Prostate gland (tissue), 2 donors: ENCODE measurements at regions of chr7 and their contacts with region 1.

Region 1: DNA sequence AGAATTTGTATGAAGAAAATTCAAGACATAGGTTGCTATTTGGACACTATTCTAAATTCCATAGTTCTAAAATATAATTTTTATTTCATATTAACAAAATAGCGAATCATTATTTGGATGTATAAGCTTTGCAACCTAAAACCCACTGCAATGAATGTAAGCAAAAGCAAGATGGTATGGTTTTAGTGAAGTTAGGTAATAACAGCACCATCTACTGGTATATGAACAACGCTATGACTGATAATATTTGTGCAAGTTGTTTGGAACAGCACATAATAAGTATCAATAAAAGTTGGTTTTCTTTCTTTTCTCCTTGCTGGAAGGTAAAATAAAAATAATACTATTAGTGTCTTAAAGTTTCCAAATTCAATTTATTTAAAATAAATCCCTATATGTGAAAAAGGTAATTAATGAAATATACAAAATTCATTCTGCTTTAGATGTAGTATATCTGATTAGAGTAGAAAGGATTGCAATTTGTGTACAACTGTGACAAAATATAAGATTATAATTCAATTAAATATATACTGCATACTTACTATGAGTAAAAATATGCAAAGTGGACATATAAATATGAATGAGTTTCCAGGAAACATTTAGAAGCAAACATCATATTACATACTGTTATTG is 79.0 kb upstream of the LSM8 start:
- DNase-seq: no peak
- H3K4me3 ChIP-seq: no peak overlapping the region
- H3K27ac ChIP-seq: no peak overlapping the region
- H3K4me1 ChIP-seq: no peaks in the 10 kb centered on the region
- H3K27me3 ChIP-seq: no peaks in the 10 kb centered on the region
- CTCF ChIP-seq: peak; percentile 14 to 69 (median 51)
- POLR2A ChIP-seq: no peak

Region 2: DNA sequence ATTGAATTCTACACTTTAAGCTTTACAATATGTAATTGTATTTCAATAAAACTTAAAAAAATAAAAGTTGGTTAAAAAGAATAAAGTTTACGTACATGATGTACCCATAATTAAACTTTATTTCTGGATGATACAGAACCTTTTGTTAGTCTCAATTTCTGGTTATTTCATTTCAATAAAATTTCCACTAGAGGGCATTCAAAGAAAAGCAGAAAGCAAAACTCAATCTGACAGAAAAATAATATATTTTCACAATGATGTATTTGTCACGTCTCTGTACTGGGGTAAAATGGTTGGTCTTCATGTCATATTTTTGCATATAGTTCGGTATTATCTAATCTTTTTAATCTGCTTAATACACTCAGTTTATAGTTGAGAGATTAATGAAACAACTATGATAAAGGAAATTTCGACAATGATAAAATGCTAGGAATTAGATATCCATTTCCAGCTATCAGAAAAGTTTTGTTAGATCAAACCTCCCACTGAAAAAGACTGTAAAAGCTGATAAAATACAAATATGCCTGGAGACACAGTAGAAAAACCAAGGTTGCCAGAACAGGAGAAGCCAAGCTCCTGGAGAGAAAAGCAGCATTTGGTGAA is 705.0 kb before region 1 on chr7:
- intact Hi-C with region 1: loop called (anchors 5 kb)
- DNase-seq: no peak
- H3K4me3 ChIP-seq: no peak overlapping the region
- H3K27ac ChIP-seq: no peak overlapping the region
- H3K4me1 ChIP-seq: no peaks in the 10 kb centered on the region
- H3K27me3 ChIP-seq: no peaks in the 10 kb centered on the region
- CTCF ChIP-seq: peak; percentile 17 to 66 (median 48)
- POLR2A ChIP-seq: no peak

Region 3: DNA sequence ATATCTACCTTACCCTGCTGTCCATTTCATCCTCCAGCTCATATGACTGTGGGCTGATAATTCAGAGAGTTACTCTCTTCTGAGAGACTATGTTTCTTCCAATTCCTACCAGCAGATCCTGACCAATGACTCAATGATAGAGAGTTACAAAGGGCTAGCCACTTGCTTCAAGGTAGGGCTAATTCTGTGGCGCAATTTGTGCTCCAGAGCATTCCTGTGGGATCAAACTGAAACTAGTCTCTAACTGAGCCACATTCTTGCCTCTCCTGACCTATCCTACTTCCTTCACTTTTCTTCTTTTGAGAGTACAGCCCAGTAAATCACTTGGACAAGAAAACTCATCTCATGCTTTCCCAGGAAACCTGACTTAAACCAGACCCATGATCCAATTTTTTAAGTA is 659.7 kb before region 1 on chr7:
- intact Hi-C with region 1: loop called (anchors 10 kb)
- DNase-seq: no peak
- H3K4me3 ChIP-seq: no peak overlapping the region
- H3K27ac ChIP-seq: no peak overlapping the region
- H3K4me1 ChIP-seq: no peaks in the 10 kb centered on the region
- H3K27me3 ChIP-seq: no peaks in the 10 kb centered on the region
- CTCF ChIP-seq: no peak
- POLR2A ChIP-seq: no peak

Region 4: GRCh38 chr7:117750612-117751563 is 354.0 kb before region 1 on chr7:
- intact Hi-C with region 1: loop called (anchors 2 kb)
- DNase-seq: no peak
- H3K4me3 ChIP-seq: no peak overlapping the region
- H3K27ac ChIP-seq: no peak overlapping the region
- H3K4me1 ChIP-seq: no peaks in the 10 kb centered on the region
- H3K27me3 ChIP-seq: no peaks in the 10 kb centered on the region
- CTCF ChIP-seq: peak in 3 of 4 experiments; percentile 42 to 66 (median 65)
- POLR2A ChIP-seq: no peak

Region 5: GRCh38 chr7:117780832-117781231 is 324.1 kb before region 1 on chr7:
- intact Hi-C with region 1: no loop called
- DNase-seq: no peak
- H3K4me3 ChIP-seq: no peak overlapping the region
- H3K27ac ChIP-seq: no peak overlapping the region
- H3K4me1 ChIP-seq: no peaks in the 10 kb centered on the region
- H3K27me3 ChIP-seq: no peaks in the 10 kb centered on the region
- CTCF ChIP-seq: no peak
- POLR2A ChIP-seq: no peak

Region 6: DNA sequence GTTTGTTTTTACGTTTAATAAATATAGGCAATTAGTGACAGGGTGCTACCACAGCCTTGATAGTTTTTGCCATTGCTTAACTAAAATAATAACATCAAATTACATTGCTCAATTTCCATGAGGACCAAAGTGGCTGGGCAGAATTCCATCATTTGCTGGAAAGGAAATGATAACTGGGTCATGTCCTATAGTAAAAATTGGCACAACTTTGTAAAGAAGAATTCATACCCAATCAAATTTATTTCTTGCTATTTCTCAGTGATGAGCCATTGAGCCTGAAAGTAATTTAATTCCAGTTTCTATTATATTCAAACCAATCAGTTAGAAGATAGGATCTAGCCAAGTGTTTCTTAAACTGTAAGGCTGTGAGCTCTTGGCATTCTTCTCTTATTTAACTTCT is 129.5 kb before region 1 on chr7:
- intact Hi-C with region 1: no loop called
- DNase-seq: no peak
- H3K4me3 ChIP-seq: no peak overlapping the region
- H3K27ac ChIP-seq: no peak overlapping the region
- H3K4me1 ChIP-seq: no peaks in the 10 kb centered on the region
- H3K27me3 ChIP-seq: no peaks in the 10 kb centered on the region
- CTCF ChIP-seq: no peak
- POLR2A ChIP-seq: no peak